ENCODE measurements at regions of chr12 and their contacts with region 1.

Region 1: GRCh38 chr12:78002878-78003277 is 172.2 kb downstream of the NAV3 start:
- DNase-seq: no peak
- H3K4me3 ChIP-seq: no peak overlapping the region
- H3K27ac ChIP-seq: no peak overlapping the region
- H3K27me3 ChIP-seq: no peaks in the 10 kb centered on the region
- CTCF ChIP-seq: peak in 32 of 56 donors; percentile 10 to 55 (median 38)

Region 2: DNA sequence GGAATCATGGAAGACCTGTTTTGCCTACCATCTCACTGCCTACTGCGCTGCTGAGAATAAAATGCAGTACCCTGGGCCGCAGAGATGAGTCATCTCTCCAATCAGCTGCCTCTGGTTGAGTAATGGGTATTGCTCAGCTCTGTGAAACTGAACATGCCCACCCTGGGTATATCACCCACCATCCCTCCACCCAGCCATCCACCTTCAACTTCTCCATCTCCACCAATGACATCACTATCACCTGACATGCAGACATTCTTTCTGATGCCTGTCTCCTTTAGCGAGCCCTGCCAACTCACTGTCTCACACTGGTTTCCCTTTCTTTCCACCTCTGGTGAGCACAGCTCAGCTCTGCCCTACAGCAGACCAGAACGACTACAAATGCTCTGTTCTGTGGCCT is 971.1 kb before region 1 on chr12:
- intact Hi-C with region 1: no loop called
- DNase-seq: peak in 3 of 10 donors; percentile 27 to 60 (median 59)
- H3K4me3 ChIP-seq: no peak overlapping the region
- H3K27ac ChIP-seq: peak overlapping the region in 53 of 59 donors; percentile 36 to 90 (median 74)
- H3K27me3 ChIP-seq: no peaks in the 10 kb centered on the region
- CTCF ChIP-seq: no peak

Region 3: DNA sequence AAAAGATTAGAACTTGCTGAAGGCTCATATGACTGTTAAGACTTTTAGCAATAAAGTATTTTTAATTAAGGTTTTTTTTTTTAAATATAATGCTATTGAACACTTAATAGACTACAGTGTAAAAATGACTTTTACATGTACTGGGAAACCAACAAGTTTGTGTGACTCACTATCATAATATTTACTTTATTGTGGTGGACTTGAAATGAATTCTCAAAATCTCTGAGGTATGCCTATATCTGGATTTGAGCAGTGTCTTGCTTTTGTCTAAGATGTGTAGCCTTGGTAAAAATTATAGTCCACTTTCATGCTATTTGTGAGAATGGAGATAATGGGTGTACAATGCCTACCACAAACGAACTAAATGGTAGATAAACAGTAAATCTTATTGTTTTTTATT is 206.1 kb before region 1 on chr12:
- intact Hi-C with region 1: no loop called
- DNase-seq: no peak
- H3K4me3 ChIP-seq: no peak overlapping the region
- H3K27ac ChIP-seq: no peak overlapping the region
- H3K27me3 ChIP-seq: no peaks in the 10 kb centered on the region
- CTCF ChIP-seq: no peak

Region 4: DNA sequence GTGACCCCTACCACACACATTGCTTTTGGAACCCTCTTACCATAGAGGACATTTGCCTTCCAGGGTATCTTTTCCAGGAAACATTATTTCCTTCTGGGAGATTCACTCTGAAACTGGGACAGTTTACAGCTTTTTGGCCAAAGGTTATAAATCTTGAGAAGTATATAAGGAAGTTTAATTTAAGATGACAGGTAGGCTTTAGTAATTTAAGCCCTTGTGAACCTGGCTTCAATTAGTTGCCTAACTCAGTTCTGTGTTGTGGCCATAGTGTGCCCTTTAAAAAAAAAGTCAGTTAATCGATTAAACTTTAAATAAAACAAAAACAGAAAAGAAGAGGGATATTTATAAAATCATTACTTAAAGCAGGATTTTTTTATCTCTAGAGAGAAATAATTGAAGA is 29.3 kb before region 1 on chr12:
- intact Hi-C with region 1: no loop called
- DNase-seq: no peak
- H3K4me3 ChIP-seq: no peak overlapping the region
- H3K27ac ChIP-seq: peak overlapping the region in 2 of 59 donors; percentile 20 to 41
- H3K27me3 ChIP-seq: no peaks in the 10 kb centered on the region
- CTCF ChIP-seq: no peak

Region 5: DNA sequence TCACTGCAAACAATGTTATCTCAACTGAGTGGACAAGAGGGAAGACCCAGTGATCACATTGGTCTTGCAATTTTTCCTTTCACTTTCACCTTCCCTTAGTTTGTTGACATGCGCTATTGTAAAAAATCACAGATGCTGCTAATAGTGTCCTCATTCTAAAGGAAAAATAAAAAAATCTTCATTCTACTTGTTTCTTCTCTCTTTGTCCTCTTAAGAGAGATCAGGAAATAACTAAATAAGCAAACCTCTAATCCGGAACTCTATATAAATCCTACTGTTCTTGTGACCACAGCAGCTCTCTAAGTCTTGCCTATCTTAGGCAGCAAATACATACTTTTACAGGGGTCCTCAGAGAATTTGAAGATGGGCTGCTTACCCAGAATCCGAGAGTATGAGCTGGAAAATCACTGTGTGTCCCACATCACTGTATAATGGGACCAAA is 85.5 kb after region 1 on chr12:
- intact Hi-C with region 1: loop called in 1 of 2 experiments (anchors 10 kb)
- DNase-seq: no peak
- H3K4me3 ChIP-seq: peak overlapping the region; percentile 1 to 66 (median 48)
- H3K27ac ChIP-seq: peak overlapping the region in 58 of 59 donors; percentile 3 to 92 (median 74)
- H3K27me3 ChIP-seq: no peaks in the 10 kb centered on the region
- CTCF ChIP-seq: peak in 3 of 56 donors; percentile 5 to 20 (median 9)

Region 6: DNA sequence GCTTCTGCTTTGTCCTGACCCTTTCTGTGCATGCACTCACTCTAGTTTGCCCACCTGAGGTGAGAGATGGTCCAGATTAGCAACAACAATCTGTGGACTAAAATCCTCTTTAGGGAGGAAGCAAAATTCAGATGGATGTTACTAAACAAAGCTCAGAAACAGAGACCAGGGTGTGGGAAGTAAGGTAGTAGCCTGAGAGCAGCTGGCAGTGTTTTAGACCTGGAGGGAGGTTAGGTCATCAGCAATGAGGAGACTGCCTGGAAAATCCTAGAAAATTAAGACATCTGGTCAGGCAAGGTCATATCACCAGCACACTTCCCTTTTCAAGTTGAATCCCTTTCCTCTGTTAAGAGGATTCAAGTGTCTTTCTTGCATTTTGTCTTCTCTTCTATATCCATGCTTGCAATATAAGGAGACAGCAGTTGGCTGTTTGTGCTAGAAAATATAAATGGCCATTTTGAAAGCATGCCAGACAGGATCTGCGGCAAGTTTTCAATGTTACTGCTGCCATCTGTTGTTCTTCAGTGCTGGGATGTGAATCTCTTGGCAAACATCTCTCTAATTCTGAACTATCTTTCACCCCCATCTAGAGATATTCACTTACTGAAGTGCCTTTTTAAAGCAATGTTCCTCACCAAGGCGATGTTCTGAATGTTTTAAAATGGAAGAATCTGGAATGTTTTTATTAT is 94.2 kb after region 1 on chr12:
- intact Hi-C with region 1: loop called in 1 of 2 experiments (anchors 2 kb)
- DNase-seq: peak in 3 of 10 donors; percentile 42 to 59 (median 49)
- H3K4me3 ChIP-seq: peak overlapping the region in 3 of 59 donors; percentile 3 to 14 (median 4)
- H3K27ac ChIP-seq: peak overlapping the region in 41 of 59 donors; percentile 1 to 87 (median 50)
- H3K27me3 ChIP-seq: no peaks in the 10 kb centered on the region
- CTCF ChIP-seq: peak in 49 of 56 donors; percentile 15 to 64 (median 37)

Region 7: DNA sequence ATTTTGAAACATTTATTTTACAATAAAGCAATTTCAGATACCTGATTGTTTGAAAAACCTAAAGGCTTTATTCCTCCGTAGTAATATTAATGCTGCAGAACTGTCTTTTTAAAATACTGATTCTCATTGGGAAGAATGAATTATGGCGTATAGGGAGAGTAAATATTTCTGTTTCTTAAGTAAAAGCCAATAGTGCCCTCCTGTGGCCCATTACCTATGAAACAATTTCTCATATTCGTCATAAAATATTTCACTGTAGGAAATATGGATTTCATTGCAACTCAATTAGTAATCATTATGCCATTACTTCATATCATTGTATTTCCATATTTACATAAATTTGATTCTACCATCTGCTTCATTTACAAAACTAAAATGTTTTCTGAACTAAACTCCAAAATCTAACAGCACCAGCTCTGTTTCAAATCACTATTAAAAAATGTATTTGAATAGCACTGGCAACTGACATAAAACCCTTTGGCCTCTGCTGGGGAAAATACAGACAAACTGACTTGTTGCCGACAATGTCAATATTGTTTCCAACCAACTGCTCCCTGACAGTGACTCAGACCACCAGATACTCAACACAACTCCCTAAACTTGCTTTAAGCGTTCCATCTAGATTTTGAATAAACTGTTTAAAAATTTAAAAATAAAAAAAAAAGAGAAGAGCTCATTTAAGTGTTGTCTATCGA is 118.1 kb after region 1 on chr12:
- intact Hi-C with region 1: loop called (anchors 2 to 5 kb)
- DNase-seq: no peak
- H3K4me3 ChIP-seq: no peak overlapping the region
- H3K27ac ChIP-seq: peak overlapping the region in 8 of 59 donors; percentile 2 to 61 (median 16)
- H3K27me3 ChIP-seq: no peaks in the 10 kb centered on the region
- CTCF ChIP-seq: peak; percentile 12 to 69 (median 54)